ENCODE measurements at regions of chr4 and their contacts with region 1.

Region 1: GRCh38 chr4:85474818-85475630 is at the start of gene ARHGAP24:
- DNase-seq: peak; percentile 76
- H3K4me3 ChIP-seq: peak within 1 kb of the TSS; percentile 14 to 45 (median 41)
- H3K27ac ChIP-seq: no peak within 1 kb of the TSS
- H3K4me1 ChIP-seq: no peaks in the 10 kb centered on the region
- H3K27me3 ChIP-seq: peaks cover 26 to 33% of the 10 kb centered on the region in 2 experiments
- CTCF ChIP-seq: no peak
- POLR2A ChIP-seq: no peak
- total RNA-seq, gene ARHGAP24: 79.4 and 87.5 TPM in 2 replicates

Region 2: DNA sequence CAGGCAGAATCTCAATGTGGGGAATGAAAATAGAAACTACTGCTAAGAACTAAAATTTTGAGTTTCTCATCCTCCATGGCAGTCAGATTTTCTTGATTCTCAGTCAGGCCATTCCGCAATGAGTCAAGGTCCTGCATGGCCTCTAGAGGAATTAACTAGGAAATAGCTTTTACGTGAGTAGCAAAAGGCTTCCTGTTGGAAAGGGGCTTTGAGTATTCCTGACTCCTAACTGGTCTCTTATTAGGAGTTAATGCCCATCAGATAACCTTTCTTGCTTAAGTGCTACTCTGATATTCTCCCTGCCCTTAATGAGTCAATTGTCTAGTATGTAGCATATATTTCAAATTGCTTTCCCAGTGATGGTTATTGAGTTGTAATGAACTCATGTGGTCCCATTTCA is 65.8 kb before region 1 on chr4:
- CTCF ChIA-PET with region 1: no interaction called
- POLR2A ChIA-PET with region 1: no interaction called
- dilution Hi-C with region 1: no loop called
- intact Hi-C with region 1: loop called (anchors 1 kb)
- DNase-seq: peak; percentile 83
- H3K4me3 ChIP-seq: no peak overlapping the region
- H3K27ac ChIP-seq: peak overlapping the region; percentile 57
- H3K4me1 ChIP-seq: peaks cover 29% of the 10 kb centered on the region
- H3K27me3 ChIP-seq: no peaks in the 10 kb centered on the region
- CTCF ChIP-seq: no peak
- POLR2A ChIP-seq: no peak

Region 3: GRCh38 chr4:85489273-85490265 is 14.5 kb after region 1 on chr4:
- CTCF ChIA-PET with region 1: interaction called, 15 read pairs
- POLR2A ChIA-PET with region 1: no interaction called
- dilution Hi-C with region 1: no loop called
- intact Hi-C with region 1: no loop called
- DNase-seq: no peak
- H3K4me3 ChIP-seq: no peak overlapping the region
- H3K27ac ChIP-seq: no peak overlapping the region
- H3K4me1 ChIP-seq: no peaks in the 10 kb centered on the region
- H3K27me3 ChIP-seq: no peaks in the 10 kb centered on the region
- CTCF ChIP-seq: no peak
- POLR2A ChIP-seq: no peak

Region 4: GRCh38 chr4:85995361-85995760 is 520.3 kb after region 1 on chr4:
- CTCF ChIA-PET with region 1: no interaction called
- POLR2A ChIA-PET with region 1: no interaction called
- dilution Hi-C with region 1: no loop called
- intact Hi-C with region 1: no loop called
- DNase-seq: no peak
- H3K4me3 ChIP-seq: no peak overlapping the region
- H3K27ac ChIP-seq: no peak overlapping the region
- H3K4me1 ChIP-seq: no peaks in the 10 kb centered on the region
- H3K27me3 ChIP-seq: no peaks in the 10 kb centered on the region
- CTCF ChIP-seq: no peak
- POLR2A ChIP-seq: no peak